ENCODE measurements at regions of chr15 and their contacts with region 1.

Region 1: GRCh38 chr15:35519541-35520149 is 26.3 kb downstream of the DPH6 start:
- DNase-seq: no peak
- H3K4me3 ChIP-seq: no peak overlapping the region
- H3K27ac ChIP-seq: no peak overlapping the region
- H3K4me1 ChIP-seq: peaks cover 41% of the 10 kb centered on the region
- H3K27me3 ChIP-seq: no peaks in the 10 kb centered on the region
- CTCF ChIP-seq: peak; percentile 77

Region 2: GRCh38 chr15:35697549-35698299 is 178.1 kb after region 1 on chr15:
- intact Hi-C with region 1: loop called (anchors 10 kb)
- DNase-seq: no peak
- H3K4me3 ChIP-seq: peak overlapping the region; percentile 11
- H3K27ac ChIP-seq: peak overlapping the region; percentile 76
- H3K4me1 ChIP-seq: peaks cover 48% of the 10 kb centered on the region
- H3K27me3 ChIP-seq: no peaks in the 10 kb centered on the region
- CTCF ChIP-seq: peak; percentile 38

Region 3: GRCh38 chr15:35912196-35912595 is 392.6 kb after region 1 on chr15:
- intact Hi-C with region 1: loop called (anchors 10 kb)
- DNase-seq: no peak
- H3K4me3 ChIP-seq: no peak overlapping the region
- H3K27ac ChIP-seq: no peak overlapping the region
- H3K4me1 ChIP-seq: peaks cover 13% of the 10 kb centered on the region
- H3K27me3 ChIP-seq: no peaks in the 10 kb centered on the region
- CTCF ChIP-seq: peak; percentile 56

Measured in left ventricle myocardium inferior (tissue), 1 donor.